Calu3 (cell line): ENCODE measurements at regions of chr5 and their contacts with region 1.

Region 1: GRCh38 chr5:127959152-127959764 is 124.3 kb upstream of the SLC12A2 start:
- DNase-seq: peak; percentile 97
- H3K4me3 Mint-ChIP-seq: peak overlapping the region; percentile 5
- H3K27ac Mint-ChIP-seq: peak overlapping the region; percentile 98
- H3K4me1 Mint-ChIP-seq: peaks cover 67% of the 10 kb centered on the region
- H3K27me3 Mint-ChIP-seq: no peaks in the 10 kb centered on the region
- CTCF ChIP-seq: no peak

Region 2: DNA sequence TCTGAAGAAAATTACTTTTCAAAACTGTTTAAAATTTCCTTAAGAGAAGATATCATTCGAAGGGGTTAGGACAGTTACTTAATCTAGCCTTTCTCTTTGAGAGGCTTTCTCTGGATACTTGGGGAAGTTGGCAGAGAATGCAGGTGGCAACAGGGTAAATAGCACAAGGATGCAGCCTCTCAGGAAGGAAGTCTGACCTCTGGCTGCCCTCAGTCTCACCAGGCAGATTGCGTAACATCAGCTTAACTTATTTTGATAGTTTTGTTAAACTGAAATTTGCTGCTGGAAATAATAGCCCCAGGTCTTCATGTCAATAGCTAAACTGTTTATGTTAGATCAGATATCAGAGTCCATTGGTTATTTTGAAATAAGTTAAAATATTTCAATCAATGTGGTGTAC is 235.7 kb before region 1 on chr5:
- CTCF ChIA-PET with region 1: no interaction called
- intact Hi-C with region 1: no loop called
- DNase-seq: peak; percentile 63
- H3K4me3 Mint-ChIP-seq: no peak overlapping the region
- H3K27ac Mint-ChIP-seq: no peak overlapping the region
- H3K4me1 Mint-ChIP-seq: peaks cover 22% of the 10 kb centered on the region
- H3K27me3 Mint-ChIP-seq: no peaks in the 10 kb centered on the region
- CTCF ChIP-seq: no peak

Region 3: DNA sequence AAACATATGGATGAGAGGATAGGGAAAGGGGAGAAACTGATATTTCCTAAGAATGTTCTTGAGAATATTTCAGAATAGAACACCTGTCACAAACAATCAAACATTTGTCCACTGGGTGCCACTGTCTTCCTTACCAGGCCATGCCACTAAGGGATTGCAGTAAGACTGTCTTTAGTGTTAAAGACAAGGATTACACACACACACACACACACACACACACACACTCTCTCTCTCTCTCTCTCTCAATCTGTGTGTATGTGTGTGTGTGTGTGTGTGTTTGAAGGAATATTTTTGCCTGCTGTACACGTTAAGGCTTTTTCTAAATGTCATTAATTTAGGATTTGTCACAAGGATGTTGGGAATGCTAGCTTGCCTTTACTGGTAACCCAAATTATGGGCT is 201.7 kb before region 1 on chr5:
- CTCF ChIA-PET with region 1: no interaction called
- intact Hi-C with region 1: loop called (anchors 2 kb)
- DNase-seq: peak; percentile 77
- H3K4me3 Mint-ChIP-seq: no peak overlapping the region
- H3K27ac Mint-ChIP-seq: peak overlapping the region; percentile 35
- H3K4me1 Mint-ChIP-seq: peaks cover 42% of the 10 kb centered on the region
- H3K27me3 Mint-ChIP-seq: no peaks in the 10 kb centered on the region
- CTCF ChIP-seq: peak; percentile 86

Region 4: GRCh38 chr5:127892467-127893207 is 66.6 kb before region 1 on chr5:
- CTCF ChIA-PET with region 1: interaction called, 6 read pairs
- intact Hi-C with region 1: loop called (anchors 2 kb)
- DNase-seq: peak; percentile 55
- H3K4me3 Mint-ChIP-seq: peak overlapping the region; percentile 28
- H3K27ac Mint-ChIP-seq: peak overlapping the region; percentile 57
- H3K4me1 Mint-ChIP-seq: peaks cover 44% of the 10 kb centered on the region
- H3K27me3 Mint-ChIP-seq: no peaks in the 10 kb centered on the region
- CTCF ChIP-seq: no peak

Region 5: GRCh38 chr5:127925916-127926315 is 33.3 kb before region 1 on chr5:
- CTCF ChIA-PET with region 1: interaction called, 14 read pairs
- intact Hi-C with region 1: loop called (anchors 1 kb)
- DNase-seq: peak; percentile 65
- H3K4me3 Mint-ChIP-seq: no peak overlapping the region
- H3K27ac Mint-ChIP-seq: peak overlapping the region; percentile 90
- H3K4me1 Mint-ChIP-seq: peaks cover 92% of the 10 kb centered on the region
- H3K27me3 Mint-ChIP-seq: no peaks in the 10 kb centered on the region
- CTCF ChIP-seq: no peak

Region 6: DNA sequence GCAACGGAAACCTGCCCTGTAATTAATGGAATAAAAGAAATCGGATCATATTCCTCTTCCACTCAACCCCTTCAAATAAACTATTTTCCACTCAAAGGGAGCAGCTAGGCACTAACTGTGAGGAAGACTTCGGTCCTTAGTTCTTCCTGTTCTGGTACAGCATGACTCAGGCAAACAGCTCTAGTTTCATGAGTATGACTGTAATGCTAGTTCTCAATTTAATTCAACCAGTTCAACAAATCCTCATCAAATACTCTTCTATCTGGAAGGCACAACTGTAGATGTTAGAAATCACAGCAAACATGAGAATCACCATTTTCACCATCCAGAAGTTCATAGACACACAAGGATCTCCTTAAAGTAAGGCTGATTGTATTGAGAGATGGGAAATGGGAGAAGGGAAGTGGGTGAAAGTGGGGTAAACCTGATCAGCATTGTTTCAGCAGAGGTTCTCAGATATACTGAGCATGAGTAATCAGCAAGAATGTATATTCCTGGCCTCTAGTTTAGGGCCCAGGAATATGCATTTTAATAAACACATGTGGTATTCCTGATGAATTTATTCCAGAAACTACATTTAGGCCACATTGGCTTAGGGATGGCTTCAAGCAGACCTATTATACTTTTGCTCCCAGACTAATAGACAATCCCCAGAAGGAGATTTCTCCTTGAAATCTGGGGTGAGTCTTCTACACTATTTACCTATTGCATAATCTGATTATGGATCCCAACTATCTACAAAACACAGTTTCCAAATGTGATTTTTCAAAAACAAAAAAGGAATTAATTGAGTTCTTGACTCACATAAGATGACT is 16.8 kb before region 1 on chr5:
- CTCF ChIA-PET with region 1: interaction called, 5 read pairs
- intact Hi-C with region 1: loop called (anchors 1 kb)
- DNase-seq: no peak
- H3K4me3 Mint-ChIP-seq: peak overlapping the region; percentile 35
- H3K27ac Mint-ChIP-seq: peak overlapping the region; percentile 58
- H3K4me1 Mint-ChIP-seq: peaks cover 54% of the 10 kb centered on the region
- H3K27me3 Mint-ChIP-seq: no peaks in the 10 kb centered on the region
- CTCF ChIP-seq: no peak

Region 7: GRCh38 chr5:128083033-128083810 is 124.0 kb after region 1 on chr5 and contains the start of gene SLC12A2:
- CTCF ChIA-PET with region 1: interaction called, 11 read pairs
- intact Hi-C with region 1: loop called (anchors 1 kb)
- DNase-seq: peak; percentile 92
- H3K4me3 Mint-ChIP-seq: peak within 1 kb of the TSS; percentile 91
- H3K27ac Mint-ChIP-seq: peak within 1 kb of the TSS; percentile 87
- H3K4me1 Mint-ChIP-seq: peaks cover 51% of the 10 kb centered on the region
- H3K27me3 Mint-ChIP-seq: no peaks in the 10 kb centered on the region
- CTCF ChIP-seq: no peak
- total RNA-seq, gene SLC12A2: 393 and 576 TPM in 2 replicates